ENCODE measurements at regions of chrX and their contacts with region 1.

Region 1: DNA sequence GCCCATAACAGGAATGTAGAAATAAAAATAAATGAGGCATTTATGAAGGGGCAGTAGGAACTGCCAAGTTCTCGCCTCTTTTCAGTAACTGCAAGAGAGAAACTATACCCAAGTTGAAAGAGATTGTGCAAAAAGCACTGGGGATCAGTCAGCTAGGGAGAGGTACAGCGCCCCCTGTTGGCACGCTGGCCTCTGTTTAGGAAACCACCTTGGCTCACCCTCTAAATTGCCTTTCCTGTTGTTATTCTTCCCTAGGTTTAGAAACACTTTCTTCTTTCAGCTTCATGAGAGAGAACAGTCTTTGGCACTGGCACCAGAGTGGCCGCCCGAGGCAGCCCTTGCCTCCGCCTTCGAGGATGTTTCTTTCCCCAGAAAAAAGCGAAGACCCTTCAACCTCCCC is 348.5 kb downstream of the MID1IP1 start:
- DNase-seq: peak; percentile 4
- H3K4me3 ChIP-seq: no peak overlapping the region
- H3K27ac ChIP-seq: no peak overlapping the region
- H3K27me3 ChIP-seq: no peaks in the 10 kb centered on the region
- CTCF ChIP-seq: peak; percentile 73

Region 2: DNA sequence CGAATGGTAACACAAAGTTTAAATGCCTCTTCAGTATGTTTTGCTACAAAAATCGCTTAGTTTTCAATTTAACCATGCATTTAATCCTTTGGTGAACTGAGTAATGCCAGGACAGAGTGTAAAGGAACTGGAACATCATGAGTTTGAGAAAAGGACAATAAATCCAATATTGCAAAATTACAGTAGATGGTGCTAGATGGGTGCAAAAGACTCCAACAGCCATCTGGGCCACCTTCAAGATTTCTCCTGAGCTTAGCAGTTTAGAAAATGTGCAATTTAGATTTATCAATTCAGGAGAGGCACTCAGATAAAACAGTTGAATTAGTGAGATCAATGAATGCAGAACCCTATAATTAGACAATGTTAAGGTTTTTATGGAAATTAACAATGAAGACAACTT is 381.7 kb before region 1 on chrX:
- CTCF ChIA-PET with region 1: interaction called, 17 read pairs
- POLR2A ChIA-PET with region 1: no interaction called
- DNase-seq: peak; percentile 6
- H3K4me3 ChIP-seq: no peak overlapping the region
- H3K27ac ChIP-seq: no peak overlapping the region
- H3K27me3 ChIP-seq: no peaks in the 10 kb centered on the region
- CTCF ChIP-seq: peak; percentile 43

Region 3: DNA sequence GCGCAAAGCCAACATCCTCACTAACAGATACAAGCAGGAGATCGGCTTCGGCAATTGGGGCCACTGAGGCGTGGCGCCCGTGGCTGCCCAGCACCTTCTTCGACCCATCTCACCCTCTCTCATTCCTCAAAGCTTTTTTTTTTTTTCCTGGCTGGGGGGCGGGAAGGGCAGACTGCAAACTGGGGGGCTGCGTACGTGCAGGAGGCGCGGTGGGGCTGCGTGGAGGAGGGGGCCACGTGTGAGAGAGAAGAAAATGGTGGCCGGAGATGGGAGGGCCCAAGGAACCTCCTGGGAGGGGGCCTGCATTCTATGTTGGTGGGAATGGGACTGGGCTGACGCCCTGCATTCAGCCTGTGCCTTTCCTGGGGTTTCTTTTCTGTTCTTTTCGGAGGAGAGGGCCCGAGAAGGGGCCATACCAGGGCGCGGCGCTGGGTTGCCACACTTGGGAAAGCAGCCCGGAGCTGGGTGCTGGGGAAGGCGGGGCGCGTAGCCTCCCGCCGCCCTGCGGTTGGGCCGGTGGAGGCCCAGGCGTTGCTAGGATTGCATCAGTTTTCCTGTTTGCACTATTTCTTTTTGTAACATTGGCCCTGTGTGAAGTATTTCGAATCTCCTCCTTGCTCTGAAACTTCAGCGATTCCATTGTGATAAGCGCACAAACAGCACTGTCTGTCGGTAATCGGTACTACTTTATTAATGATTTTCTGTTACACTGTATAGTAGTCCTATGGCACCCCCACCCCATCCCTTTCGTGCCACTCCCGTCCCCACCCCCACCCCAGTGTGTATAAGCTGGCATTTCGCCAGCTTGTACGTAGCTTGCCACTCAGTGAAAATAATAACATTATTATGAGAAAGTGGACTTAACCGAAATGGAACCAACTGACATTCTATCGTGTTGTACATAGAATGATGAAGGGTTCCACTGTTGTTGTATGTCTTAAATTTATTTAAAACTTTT is 344.1 kb before region 1 on chrX:
- CTCF ChIA-PET with region 1: interaction called, 10 read pairs
- POLR2A ChIA-PET with region 1: no interaction called
- DNase-seq: peak; percentile 43
- H3K4me3 ChIP-seq: peak overlapping the region; percentile 75
- H3K27ac ChIP-seq: peak overlapping the region; percentile 83
- H3K27me3 ChIP-seq: no peaks in the 10 kb centered on the region
- CTCF ChIP-seq: no peak

Region 4: GRCh38 chrX:39275500-39276068 is 125.8 kb after region 1 on chrX:
- CTCF ChIA-PET with region 1: no interaction called
- POLR2A ChIA-PET with region 1: no interaction called
- DNase-seq: no peak
- H3K4me3 ChIP-seq: no peak overlapping the region
- H3K27ac ChIP-seq: no peak overlapping the region
- H3K27me3 ChIP-seq: no peaks in the 10 kb centered on the region
- CTCF ChIP-seq: no peak